OCI-LY7 (cell line): ENCODE measurements at regions of chr9 and their contacts with region 1.

Region 1: GRCh38 chr9:111597817-111598729 is 1.4 kb downstream of the PTGR1 start:
- DNase-seq: peak; percentile 66
- H3K4me3 ChIP-seq: peak overlapping the region; percentile 43
- H3K27ac ChIP-seq: no peak overlapping the region
- H3K4me1 ChIP-seq: peaks cover 4% of the 10 kb centered on the region
- CTCF ChIP-seq: peak; percentile 89

Region 2: DNA sequence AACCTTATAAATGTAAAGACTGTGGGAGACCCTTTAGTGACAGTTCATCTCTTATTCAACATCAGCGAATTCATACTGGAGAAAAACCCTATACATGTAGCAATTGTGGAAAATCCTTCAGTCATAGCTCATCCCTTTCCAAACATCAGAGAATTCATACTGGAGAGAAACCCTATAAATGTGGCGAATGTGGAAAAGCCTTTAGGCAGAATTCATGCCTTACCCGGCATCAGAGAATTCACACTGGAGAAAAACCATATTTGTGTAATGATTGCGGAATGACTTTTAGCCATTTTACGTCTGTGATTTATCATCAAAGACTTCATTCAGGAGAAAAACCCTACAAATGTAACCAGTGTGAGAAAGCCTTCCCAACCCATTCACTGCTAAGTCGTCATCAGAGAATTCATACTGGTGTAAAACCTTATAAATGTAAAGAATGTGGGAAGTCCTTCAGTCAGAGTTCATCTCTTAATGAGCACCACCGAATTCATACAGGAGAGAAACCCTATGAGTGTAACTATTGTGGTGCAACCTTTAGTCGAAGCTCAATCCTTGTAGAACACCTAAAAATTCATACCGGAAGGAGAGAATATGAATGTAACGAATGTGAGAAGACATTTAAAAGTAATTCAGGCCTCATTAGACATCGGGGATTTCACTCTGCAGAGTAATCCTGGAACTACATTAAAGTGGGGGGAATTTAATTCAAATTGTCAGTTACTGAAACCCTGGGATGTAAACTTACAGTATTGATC is 55.4 kb before region 1 on chr9:
- CTCF ChIA-PET with region 1: no interaction called
- POLR2A ChIA-PET with region 1: no interaction called
- intact Hi-C with region 1: no loop called
- DNase-seq: no peak
- H3K4me3 ChIP-seq: no peak overlapping the region
- H3K27ac ChIP-seq: no peak overlapping the region
- H3K4me1 ChIP-seq: no peaks in the 10 kb centered on the region
- CTCF ChIP-seq: no peak

Region 3: DNA sequence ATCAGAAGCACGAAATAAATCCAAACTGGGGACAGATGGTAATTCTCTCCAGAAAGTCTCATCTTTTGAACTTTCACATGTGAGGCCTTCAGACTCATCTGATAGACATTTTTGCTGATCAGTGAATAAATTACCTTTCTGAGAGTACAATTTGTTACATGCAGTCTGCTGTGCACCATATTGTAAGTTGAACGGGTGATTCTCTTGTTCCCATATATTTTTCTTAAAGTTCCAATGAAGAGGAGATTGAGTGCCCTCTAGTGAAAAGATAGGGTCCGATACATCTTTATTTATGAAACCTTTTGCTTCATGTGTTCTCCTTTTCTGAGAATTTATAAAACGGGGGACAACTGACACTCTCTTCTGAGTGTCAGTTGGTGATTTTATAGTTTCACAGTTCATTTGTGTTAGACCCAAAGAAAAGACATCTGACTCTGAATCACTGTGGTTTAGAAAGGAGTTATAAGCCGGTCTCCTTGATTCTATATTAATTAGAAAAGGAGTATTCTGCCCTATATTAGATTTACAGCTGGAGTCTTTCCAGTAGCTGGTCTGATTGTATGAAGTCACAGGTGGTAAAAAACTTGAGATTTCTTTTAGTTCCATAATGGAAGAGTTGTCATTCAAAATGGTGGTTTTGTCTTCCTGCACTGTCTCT is 93.7 kb after region 1 on chr9:
- CTCF ChIA-PET with region 1: no interaction called
- POLR2A ChIA-PET with region 1: interaction called, 8 read pairs
- intact Hi-C with region 1: loop called (anchors 5 kb)
- DNase-seq: peak; percentile 43
- H3K4me3 ChIP-seq: no peak overlapping the region
- H3K27ac ChIP-seq: no peak overlapping the region
- H3K4me1 ChIP-seq: no peaks in the 10 kb centered on the region
- CTCF ChIP-seq: peak; percentile 82

Region 4: DNA sequence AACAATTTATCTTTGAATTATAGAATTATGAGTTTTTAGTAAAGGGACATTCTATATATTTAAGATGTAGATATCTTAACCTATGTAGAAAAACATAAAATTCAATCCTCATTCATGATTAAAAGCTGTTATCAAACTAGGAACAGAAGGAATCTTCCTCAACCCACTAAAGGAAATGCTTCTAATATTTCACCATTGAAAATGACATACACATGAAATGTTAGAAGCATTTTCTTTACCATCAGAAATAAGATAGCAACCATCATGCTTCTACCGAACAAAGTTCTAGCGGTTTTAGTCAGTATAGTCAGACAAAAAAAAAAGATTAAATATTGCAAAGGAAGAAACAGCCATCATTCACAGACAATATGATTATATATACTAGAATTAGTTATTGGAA is 164.5 kb after region 1 on chr9:
- CTCF ChIA-PET with region 1: no interaction called
- POLR2A ChIA-PET with region 1: no interaction called
- intact Hi-C with region 1: no loop called
- DNase-seq: no peak
- H3K4me3 ChIP-seq: no peak overlapping the region
- H3K27ac ChIP-seq: no peak overlapping the region
- H3K4me1 ChIP-seq: no peaks in the 10 kb centered on the region
- CTCF ChIP-seq: no peak